ENCODE measurements at regions of chr7 and their contacts with region 1.

Region 1: DNA sequence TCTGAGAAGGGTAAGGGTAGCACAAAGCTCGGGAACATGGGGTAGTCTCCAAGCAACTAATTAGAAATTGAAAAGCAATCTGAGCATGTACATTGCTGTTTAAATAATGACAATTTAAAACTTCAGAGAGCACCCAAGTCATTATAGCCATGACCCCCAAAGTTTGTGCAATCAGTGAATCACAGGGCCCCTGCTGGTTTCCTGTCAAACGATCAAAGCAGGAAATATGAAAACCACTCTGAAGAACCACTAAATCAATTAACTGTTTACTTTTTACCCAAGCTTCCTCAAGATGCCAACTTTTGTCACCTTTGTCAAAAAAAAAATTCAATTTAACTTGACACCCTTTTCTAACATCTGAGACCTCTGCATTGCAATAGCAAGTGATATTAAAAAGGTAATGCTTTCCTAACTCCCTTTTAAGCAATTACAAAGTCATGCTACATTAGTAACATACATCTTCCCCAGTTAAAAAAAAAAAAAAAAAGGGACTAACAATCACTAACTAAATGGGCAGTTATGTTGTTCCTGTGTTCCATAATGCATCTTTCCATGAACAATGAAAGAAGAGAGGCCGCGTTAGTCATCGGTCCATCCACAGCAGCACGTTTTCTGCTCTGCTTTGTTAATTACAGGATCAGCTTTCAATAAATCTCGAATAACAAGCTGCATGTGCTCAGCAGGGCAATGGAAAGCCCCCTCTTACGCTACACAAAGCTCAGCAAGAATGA is 80.6 kb downstream of the ETV1 start:
- DNase-seq: no peak
- ATAC-seq: no peak
- H3K4me3 ChIP-seq: no peak overlapping the region
- H3K27ac ChIP-seq: no peak overlapping the region
- H3K4me1 ChIP-seq: no peaks in the 10 kb centered on the region
- H3K27me3 ChIP-seq: no peaks in the 10 kb centered on the region
- CTCF ChIP-seq: no peak
- EP300 ChIP-seq: no peak
- POLR2A ChIP-seq: no peak
- RAD21 ChIP-seq: no peak

Region 2: DNA sequence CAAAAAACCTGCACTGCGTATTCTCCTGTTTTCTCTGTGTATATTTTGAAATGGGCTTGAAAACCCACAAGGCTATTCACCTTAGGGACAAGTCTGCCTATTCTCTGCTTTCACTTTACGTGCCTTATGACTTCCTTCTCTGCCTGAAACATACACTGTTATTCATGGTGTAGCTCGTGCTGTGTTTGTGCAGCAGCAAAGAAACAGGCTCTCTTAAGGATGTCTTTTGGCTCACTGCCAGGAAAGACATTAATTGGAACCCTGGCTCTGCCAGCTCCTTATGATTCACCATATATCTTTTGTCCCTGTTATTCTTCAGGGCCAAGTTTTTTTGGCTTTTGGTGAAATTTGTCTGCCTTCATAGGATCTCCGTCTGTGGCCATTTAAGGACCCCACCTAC is 1605.3 kb before region 1 on chr7:
- CTCF ChIA-PET with region 1: no interaction called
- POLR2A ChIA-PET with region 1: no interaction called
- in situ Hi-C with region 1: loop called (anchors 10 kb)
- intact Hi-C with region 1: no loop called
- DNase-seq: peak in 2 of 4 experiments; percentile 9 to 25
- ATAC-seq: peak; percentile 48
- H3K4me3 ChIP-seq: no peak overlapping the region
- H3K27ac ChIP-seq: no peak overlapping the region
- H3K4me1 ChIP-seq: no peaks in the 10 kb centered on the region
- H3K27me3 ChIP-seq: no peaks in the 10 kb centered on the region
- CTCF ChIP-seq: no peak
- EP300 ChIP-seq: no peak
- POLR2A ChIP-seq: no peak
- RAD21 ChIP-seq: no peak

Region 3: DNA sequence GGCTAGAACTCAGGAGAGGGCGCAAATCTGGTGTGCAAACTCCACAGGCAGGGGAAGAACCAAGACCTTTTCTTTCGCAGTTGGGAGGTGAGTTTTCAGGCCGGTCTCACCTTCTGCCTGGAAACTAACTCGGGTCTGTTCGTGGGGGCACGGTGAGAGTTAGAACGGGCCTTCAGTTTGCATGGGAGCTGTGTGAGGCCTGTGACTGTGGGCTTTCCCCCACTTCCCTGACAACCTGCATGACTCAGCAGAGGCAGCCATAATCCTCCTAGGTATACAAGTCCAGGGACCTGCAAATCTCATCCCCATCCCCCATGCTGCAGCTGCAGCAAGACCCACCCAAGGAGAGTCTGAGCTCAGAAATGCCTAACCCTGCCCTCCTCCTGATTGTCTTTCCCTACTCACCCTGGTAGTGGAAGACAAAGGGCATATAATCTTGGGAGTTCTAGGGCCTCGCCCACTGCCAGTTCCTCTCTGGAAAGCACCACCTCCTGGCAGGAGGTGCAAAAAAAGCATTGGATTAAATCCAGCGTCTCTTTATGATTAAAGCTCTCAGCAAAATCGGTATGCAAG is 275.5 kb after region 1 on chr7:
- CTCF ChIA-PET with region 1: no interaction called
- POLR2A ChIA-PET with region 1: no interaction called
- in situ Hi-C with region 1: no loop called
- intact Hi-C with region 1: no loop called
- DNase-seq: peak in 1 of 4 experiments; percentile 1
- ATAC-seq: no peak
- H3K4me3 ChIP-seq: no peak overlapping the region
- H3K27ac ChIP-seq: no peak overlapping the region
- H3K4me1 ChIP-seq: no peaks in the 10 kb centered on the region
- H3K27me3 ChIP-seq: no peaks in the 10 kb centered on the region
- CTCF ChIP-seq: no peak
- EP300 ChIP-seq: no peak
- POLR2A ChIP-seq: no peak
- RAD21 ChIP-seq: no peak

Measured in K562 (cell line).